A549 (cell line): ENCODE measurements at regions of chr11 and their contacts with region 1.

Region 1: DNA sequence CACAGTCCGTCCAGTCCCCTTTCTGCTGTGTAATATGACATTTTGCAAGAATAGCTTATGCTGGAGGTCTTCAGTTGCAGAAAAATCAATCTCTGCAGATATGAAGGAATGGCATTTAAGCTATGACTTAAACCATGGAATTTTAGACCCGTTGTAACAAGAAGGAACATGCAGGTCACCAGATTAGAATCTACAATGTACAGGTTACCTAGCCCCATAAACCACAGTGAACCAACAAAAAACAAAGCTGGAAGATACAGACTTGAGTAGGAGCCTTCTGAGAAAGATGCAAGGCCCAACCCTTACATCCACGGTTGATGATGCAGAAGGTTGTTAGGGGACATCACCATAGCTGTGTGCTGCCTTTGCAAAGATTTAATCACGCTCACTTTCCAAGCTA is 132.5 kb downstream of the WT1 start:
- DNase-seq: no peak
- ATAC-seq: no peak
- H3K4me3 ChIP-seq: no peak overlapping the region
- H3K27ac ChIP-seq: no peak overlapping the region
- H3K4me1 ChIP-seq: no peaks in the 10 kb centered on the region
- CTCF ChIP-seq: no peak
- EP300 ChIP-seq: no peak
- POLR2A ChIP-seq: no peak
- RAD21 ChIP-seq: no peak

Region 2: DNA sequence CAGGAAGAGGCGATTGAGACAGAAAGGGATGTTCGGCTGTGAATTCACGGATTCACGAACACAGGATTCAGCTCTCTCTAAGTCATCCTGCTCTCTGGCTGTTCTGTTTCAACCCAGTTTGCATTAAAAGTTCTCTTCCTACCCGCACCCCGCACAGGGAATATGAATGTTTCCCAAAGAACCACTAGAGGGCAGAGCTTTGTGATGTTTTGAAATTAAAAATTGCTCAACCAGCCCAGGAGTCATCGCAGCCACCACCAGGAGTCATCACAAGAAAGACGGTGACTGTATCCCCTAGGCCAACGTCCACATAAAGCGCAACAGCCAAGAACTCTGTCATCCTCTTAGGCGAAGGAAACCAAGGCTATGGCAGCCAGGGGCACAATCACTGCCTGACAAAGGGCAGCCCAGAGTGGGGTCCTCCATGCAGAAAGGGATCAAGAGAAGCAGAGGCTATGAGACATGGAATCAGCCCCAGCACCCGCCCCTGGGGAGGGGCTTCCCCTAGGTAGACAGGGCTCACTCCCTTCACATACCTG is 10.1 kb after region 1 on chr11:
- CTCF ChIA-PET with region 1: interaction called, 18 read pairs
- POLR2A ChIA-PET with region 1: interaction called, 3 read pairs
- DNase-seq: peak; percentile 79 to 88
- ATAC-seq: peak; percentile 89 to 94
- H3K4me3 ChIP-seq: peak overlapping the region; percentile 18; the same call in 1 of the 3 replicates
- H3K27ac ChIP-seq: peak overlapping the region; percentile 80 to 87
- H3K4me1 ChIP-seq: peaks cover 41% of the 10 kb centered on the region
- CTCF ChIP-seq: peak; percentile 91
- EP300 ChIP-seq: no peak
- POLR2A ChIP-seq: no peak
- RAD21 ChIP-seq: peak; percentile 44 to 54

Region 3: DNA sequence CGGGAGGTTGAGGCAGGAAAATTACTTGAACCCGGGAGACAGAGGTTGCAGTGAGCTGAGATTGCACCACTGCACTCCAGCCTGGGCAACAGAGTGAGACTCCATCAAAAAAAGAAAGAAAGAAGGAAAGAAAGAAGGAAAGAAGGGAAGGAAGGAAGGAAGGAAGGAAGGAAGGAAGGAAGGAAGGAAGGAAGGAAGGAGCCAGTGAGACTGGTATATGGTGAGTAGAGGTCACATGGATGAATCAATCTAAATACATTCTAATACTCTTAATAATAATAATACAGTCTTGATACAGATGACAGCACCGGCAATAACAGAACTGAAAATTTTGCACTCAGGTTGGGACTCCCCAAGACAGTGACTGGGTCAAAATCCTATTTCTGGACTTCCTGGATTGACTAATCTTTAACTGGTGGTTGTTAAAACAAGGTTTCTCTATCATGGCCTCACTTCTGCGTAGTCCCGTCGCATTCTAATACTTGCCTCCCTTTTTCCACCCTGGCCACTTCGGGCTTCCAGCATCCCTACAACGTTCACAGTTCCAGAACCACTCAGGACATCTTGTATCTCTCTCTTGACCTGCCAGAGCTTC is 227.3 kb after region 1 on chr11:
- CTCF ChIA-PET with region 1: no interaction called
- POLR2A ChIA-PET with region 1: no interaction called
- DNase-seq: no peak
- ATAC-seq: no peak
- H3K4me3 ChIP-seq: no peak overlapping the region
- H3K27ac ChIP-seq: no peak overlapping the region
- H3K4me1 ChIP-seq: no peaks in the 10 kb centered on the region
- CTCF ChIP-seq: no peak
- EP300 ChIP-seq: no peak
- POLR2A ChIP-seq: no peak
- RAD21 ChIP-seq: no peak